A549 (cell line): ENCODE measurements at regions of chr6 and their contacts with region 1.

Region 1: GRCh38 chr6:152316024-152316423 is 321.1 kb downstream of the SYNE1 start:
- DNase-seq: no peak
- ATAC-seq: no peak
- H3K4me3 ChIP-seq: no peak overlapping the region
- H3K27ac ChIP-seq: no peak overlapping the region
- H3K4me1 ChIP-seq: peaks cover 10% of the 10 kb centered on the region; the same call in 2 of the 3 replicates
- CTCF ChIP-seq: no peak
- EP300 ChIP-seq: no peak
- POLR2A ChIP-seq: no peak
- RAD21 ChIP-seq: no peak

Region 2: DNA sequence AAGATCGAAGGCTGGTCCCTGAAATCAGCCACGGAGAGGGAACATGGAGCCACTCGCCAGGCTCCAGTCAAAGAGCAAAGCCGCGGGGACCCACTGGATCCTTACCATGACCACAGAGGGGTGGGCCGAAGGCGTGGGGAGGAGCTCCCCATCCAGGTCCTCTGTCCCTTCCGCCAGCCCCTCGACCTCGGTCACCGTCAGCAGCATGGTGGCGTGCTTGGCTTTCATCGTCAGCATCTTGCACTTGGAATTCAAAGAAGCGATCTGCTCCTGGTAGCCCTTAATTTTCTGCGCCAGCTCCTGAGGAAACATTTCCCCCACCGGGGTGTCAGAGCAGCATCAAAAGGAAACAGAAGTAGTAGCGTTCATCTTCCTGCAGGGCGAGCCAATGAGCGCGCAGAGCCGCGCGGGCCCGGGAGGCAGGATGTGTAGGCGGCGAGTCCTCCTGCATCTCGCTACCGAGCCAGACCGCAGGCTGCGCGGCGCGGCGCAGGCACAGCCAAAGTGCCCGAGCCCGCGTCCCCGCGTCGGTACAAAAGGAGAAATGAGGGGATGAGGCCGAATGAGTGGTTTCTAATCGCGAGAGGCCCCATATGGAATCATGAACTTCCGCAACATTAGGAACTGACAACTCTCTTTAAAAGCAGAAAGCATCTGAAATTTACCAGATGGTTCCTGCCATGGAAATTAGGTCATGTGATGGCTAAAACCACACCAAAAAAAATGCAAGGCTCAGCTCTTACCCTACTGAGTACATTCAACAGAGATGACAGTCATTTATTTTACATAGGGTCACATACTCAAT is 14.1 kb before region 1 on chr6:
- CTCF ChIA-PET with region 1: interaction called, 18 read pairs
- POLR2A ChIA-PET with region 1: no interaction called
- DNase-seq: peak; percentile 61 to 84
- ATAC-seq: peak; percentile 99 to 100
- H3K4me3 ChIP-seq: peak overlapping the region; percentile 67
- H3K27ac ChIP-seq: peak overlapping the region; percentile 70 to 83
- H3K4me1 ChIP-seq: 0 out of 3 replicates have a peak, but pooled peaks cover 9% of the 10 kb centered on the region
- CTCF ChIP-seq: peak; percentile 34
- EP300 ChIP-seq: no peak
- POLR2A ChIP-seq: peak; percentile 56
- RAD21 ChIP-seq: peak; percentile 19 to 33; a peak in 1 of 5 replicates

Region 3: DNA sequence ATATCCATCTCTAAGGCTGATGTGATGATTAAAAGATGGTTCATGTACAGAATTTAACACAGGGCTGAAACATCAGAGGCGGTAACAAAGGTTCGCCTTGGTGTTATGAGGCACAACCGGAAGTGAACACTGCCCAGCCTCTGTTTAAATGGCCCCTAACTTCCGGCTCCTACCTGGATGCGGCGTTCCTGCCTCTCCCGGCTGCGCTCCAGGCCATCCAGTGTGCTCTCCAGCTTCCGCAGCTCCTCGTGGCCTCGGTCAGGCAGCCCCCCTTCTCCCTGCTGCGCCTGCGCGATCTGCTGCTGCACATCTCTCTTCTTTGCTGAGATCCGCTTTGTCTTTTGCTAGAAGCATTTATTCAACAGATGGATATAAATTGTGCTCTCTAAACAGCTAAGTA is 125.9 kb after region 1 on chr6:
- CTCF ChIA-PET with region 1: no interaction called
- POLR2A ChIA-PET with region 1: no interaction called
- DNase-seq: no peak
- ATAC-seq: no peak
- H3K4me3 ChIP-seq: no peak overlapping the region
- H3K27ac ChIP-seq: no peak overlapping the region
- H3K4me1 ChIP-seq: no peaks in the 10 kb centered on the region
- CTCF ChIP-seq: no peak
- EP300 ChIP-seq: no peak
- POLR2A ChIP-seq: no peak
- RAD21 ChIP-seq: no peak